T-cell (primary cell): ENCODE measurements at regions of chr12 and their contacts with region 1.

Region 1: GRCh38 chr12:101939856-101940265 is 62.5 kb downstream of the DRAM1 start:
- DNase-seq: peak in 33 of 35 experiments; percentile 6 to 73 (median 36)
- ATAC-seq: peak in 3 of 4 experiments; percentile 61 to 67 (median 63)
- H3K4me3 ChIP-seq: no peak overlapping the region
- H3K4me3 Mint-ChIP-seq: no peak overlapping the region
- H3K27ac ChIP-seq: no peak overlapping the region
- H3K27ac Mint-ChIP-seq: no peak overlapping the region
- H3K4me1 ChIP-seq: no peaks in the 10 kb centered on the region
- H3K4me1 Mint-ChIP-seq: peaks cover 0 to 3% (median 0%) of the 10 kb centered on the region in 3 donors
- H3K27me3 ChIP-seq: peaks cover 0 to 4% of the 10 kb centered on the region in 2 experiments
- H3K27me3 Mint-ChIP-seq: peaks cover 5 to 21% of the 10 kb centered on the region in 2 donors

Region 2: DNA sequence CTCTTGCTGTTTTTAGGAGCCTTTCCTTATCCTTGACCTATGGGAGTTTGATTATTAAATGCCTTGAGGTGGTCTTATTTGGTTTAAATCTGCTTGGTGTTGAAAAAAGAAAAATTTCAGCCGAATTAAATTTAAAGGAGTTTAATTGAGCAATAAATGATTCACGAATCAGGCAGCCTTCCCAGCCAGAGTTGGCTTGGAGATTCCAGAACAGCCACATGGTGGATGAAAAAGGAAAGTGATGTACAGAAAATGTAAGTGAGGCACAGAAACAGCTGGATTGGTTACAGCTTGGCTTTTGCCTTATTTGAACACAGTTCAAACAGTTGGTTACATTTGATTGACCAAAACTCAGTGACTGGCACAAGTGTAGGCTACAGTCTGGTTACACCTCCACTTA is 52.2 kb after region 1 on chr12:
- CTCF ChIA-PET with region 1: no interaction called
- POLR2A ChIA-PET with region 1: no interaction called
- DNase-seq: no peak
- ATAC-seq: no peak
- H3K4me3 ChIP-seq: no peak overlapping the region
- H3K4me3 Mint-ChIP-seq: no peak overlapping the region
- H3K27ac ChIP-seq: no peak overlapping the region
- H3K27ac Mint-ChIP-seq: no peak overlapping the region
- H3K4me1 ChIP-seq: no peaks in the 10 kb centered on the region
- H3K4me1 Mint-ChIP-seq: no peaks in the 10 kb centered on the region
- H3K27me3 ChIP-seq: peaks cover 0 to 10% of the 10 kb centered on the region in 2 experiments
- H3K27me3 Mint-ChIP-seq: peaks cover 25 to 30% of the 10 kb centered on the region in 2 donors

Region 3: GRCh38 chr12:102419094-102419764 is 479.4 kb after region 1 on chr12:
- CTCF ChIA-PET with region 1: no interaction called
- POLR2A ChIA-PET with region 1: no interaction called
- DNase-seq: no peak
- ATAC-seq: no peak
- H3K4me3 ChIP-seq: no peak overlapping the region
- H3K4me3 Mint-ChIP-seq: no peak overlapping the region
- H3K27ac ChIP-seq: no peak overlapping the region
- H3K27ac Mint-ChIP-seq: no peak overlapping the region
- H3K4me1 ChIP-seq: no peaks in the 10 kb centered on the region
- H3K4me1 Mint-ChIP-seq: peaks cover 0 to 2% (median 0%) of the 10 kb centered on the region in 3 donors
- H3K27me3 ChIP-seq: no peaks in the 10 kb centered on the region
- H3K27me3 Mint-ChIP-seq: peaks cover 0 to 4% of the 10 kb centered on the region in 2 donors

Region 4: DNA sequence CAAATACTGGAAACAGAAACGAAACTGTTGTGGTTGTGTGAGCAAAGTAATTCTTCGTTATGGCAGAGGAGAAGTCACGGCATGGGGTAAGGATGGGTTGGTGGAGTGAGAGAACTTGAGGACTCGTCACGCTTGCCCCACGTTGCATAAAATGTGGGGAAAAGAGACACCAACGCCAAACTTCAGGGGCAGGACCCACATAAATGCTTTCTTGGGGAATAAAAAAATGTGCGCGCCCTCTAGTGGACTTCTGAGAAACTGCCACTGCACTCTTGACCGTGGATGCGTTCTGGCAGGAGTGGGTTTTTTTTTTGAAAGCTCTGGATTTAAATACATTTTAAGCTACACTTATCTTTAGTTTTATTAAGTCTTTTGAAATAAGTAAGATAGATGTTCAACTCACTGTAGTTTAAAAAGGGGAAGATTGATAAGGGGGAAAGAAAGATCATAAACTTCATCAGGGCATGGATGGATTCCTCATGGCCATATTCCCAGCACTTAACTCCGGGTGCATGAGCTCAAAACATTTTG is 544.6 kb after region 1 on chr12:
- CTCF ChIA-PET with region 1: interaction called, 13 to 26 read pairs
- POLR2A ChIA-PET with region 1: no interaction called
- DNase-seq: peak in 28 of 35 experiments; percentile 2 to 67 (median 22)
- ATAC-seq: peak in 1 of 4 experiments; percentile 44
- H3K4me3 ChIP-seq: peak overlapping the region in 1 of 2 donors; percentile 31
- H3K4me3 Mint-ChIP-seq: peak overlapping the region; percentile 29 to 69 (median 58)
- H3K27ac ChIP-seq: no peak overlapping the region
- H3K27ac Mint-ChIP-seq: peak overlapping the region in 1 of 2 donors; percentile 15
- H3K4me1 ChIP-seq: peaks cover 2 to 3% of the 10 kb centered on the region in 2 experiments
- H3K4me1 Mint-ChIP-seq: peaks cover 6 to 10% (median 9%) of the 10 kb centered on the region in 3 donors
- H3K27me3 ChIP-seq: peaks cover 0 to 2% of the 10 kb centered on the region in 2 experiments
- H3K27me3 Mint-ChIP-seq: peaks cover 0 to 11% of the 10 kb centered on the region in 2 donors